ENCODE measurements at regions of chr4 and their contacts with region 1.

Region 1: DNA sequence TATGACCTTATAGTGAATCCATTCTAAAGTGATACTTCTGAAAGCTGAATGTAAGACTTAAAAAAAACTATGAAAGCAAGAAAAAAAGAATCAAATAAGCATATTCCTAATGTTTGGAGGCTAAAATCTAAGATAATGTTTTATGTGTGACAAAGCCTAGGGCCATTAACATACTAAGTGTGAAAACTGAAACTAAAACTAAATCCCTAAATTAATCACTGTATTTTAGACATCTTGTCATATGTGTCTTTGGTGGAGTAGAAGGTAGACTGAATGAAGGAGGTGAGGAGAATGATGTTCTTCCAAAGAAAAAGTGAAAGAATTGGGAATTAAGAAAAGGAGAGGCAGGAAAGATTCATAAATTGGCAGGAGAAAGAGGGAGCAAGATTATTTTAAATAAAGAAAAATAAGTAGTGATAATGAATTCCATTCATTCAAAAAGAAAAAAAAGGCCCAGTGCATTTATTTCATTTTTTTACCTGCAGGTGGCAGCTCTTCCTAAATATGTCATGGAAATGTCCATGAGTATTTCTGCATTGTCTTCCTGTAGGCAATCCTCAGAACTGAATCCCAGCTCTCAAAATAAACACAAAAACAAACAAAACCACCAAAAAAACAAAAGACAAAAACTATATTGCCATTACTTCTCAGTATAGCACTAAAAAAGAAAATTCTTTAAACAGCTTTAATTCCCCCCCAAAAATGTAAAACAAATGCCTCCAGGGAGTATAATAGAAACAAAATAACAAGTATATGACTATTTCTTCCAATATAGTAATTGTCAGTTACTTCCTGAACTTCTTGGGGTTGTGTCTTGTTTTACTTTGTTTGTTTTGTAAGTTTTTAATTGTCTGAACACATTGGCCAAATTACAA is 17.0 kb upstream of the AP1AR start:
- DNase-seq: no peak
- CTCF ChIP-seq: peak; percentile 33

Region 2: GRCh38 chr4:112225157-112225556 is 10.5 kb after region 1 on chr4:
- CTCF ChIA-PET with region 1: interaction called, 10 read pairs
- POLR2A ChIA-PET with region 1: no interaction called
- DNase-seq: no peak
- CTCF ChIP-seq: no peak